ENCODE measurements at regions of chr20 and their contacts with region 1.

Region 1: GRCh38 chr20:13819885-13820645 is 35.2 kb downstream of the NDUFAF5 start:
- DNase-seq: peak; percentile 27
- ATAC-seq: peak; percentile 69

Region 2: GRCh38 chr20:13898011-13898612 is 78.0 kb after region 1 on chr20:
- intact Hi-C with region 1: no loop called
- DNase-seq: no peak
- ATAC-seq: no peak

Region 3: GRCh38 chr20:14055127-14055742 is 235.2 kb after region 1 on chr20:
- intact Hi-C with region 1: loop called (anchors 2 to 5 kb)
- DNase-seq: no peak
- ATAC-seq: peak in 1 of 2 donors; percentile 39

Measured in left cardiac atrium (tissue), 4 donors.